Heart right ventricle (tissue), 16 donors: ENCODE measurements at regions of chr22 and their contacts with region 1.

Region 1: GRCh38 chr22:24736526-24737053 is 37.9 kb downstream of the PIWIL3 start:
- DNase-seq: no peak
- ATAC-seq: peak in 1 of 8 donors; percentile 55
- H3K4me3 ChIP-seq: no peak overlapping the region
- H3K27ac ChIP-seq: no peak overlapping the region
- H3K4me1 ChIP-seq: no peaks in the 10 kb centered on the region
- H3K27me3 ChIP-seq: peaks cover 0 to 33% (median 6%) of the 10 kb centered on the region in 7 donors
- CTCF ChIP-seq: no peak

Region 2: DNA sequence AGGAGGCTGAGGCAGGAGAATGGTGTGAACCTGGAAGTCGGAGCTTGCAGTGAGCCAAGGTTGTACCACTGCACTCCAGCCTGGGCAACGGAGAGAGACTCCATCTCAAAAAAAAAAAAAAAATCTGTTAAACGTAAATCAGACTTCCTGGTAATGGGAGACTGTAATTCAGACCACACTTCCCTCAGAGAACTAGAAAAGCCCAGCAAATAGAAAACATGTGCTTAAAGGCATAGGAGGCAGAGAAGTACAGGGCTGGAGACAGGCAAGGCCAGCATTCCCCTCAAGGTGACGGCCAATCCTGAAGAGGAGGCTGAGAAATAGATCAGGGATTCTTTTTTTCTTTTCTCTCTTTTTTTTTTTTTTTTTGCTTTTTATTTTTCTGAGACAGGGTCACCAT is 499.9 kb before region 1 on chr22:
- intact Hi-C with region 1: loop called in 1 of 10 experiments (anchors 5 kb)
- DNase-seq: no peak
- ATAC-seq: no peak
- H3K4me3 ChIP-seq: no peak overlapping the region
- H3K27ac ChIP-seq: no peak overlapping the region
- H3K4me1 ChIP-seq: peaks cover 0 to 17% (median 5%) of the 10 kb centered on the region in 9 donors
- H3K27me3 ChIP-seq: no peaks in the 10 kb centered on the region
- CTCF ChIP-seq: no peak

Region 3: GRCh38 chr22:24926849-24927579 is 190.4 kb after region 1 on chr22:
- intact Hi-C with region 1: no loop called
- DNase-seq: no peak
- ATAC-seq: no peak
- H3K4me3 ChIP-seq: no peak overlapping the region
- H3K27ac ChIP-seq: peak overlapping the region in 1 of 10 donors; percentile 33
- H3K4me1 ChIP-seq: no peaks in the 10 kb centered on the region
- H3K27me3 ChIP-seq: peaks cover 0 to 4% (median 0%) of the 10 kb centered on the region in 7 donors
- CTCF ChIP-seq: no peak

Region 4: DNA sequence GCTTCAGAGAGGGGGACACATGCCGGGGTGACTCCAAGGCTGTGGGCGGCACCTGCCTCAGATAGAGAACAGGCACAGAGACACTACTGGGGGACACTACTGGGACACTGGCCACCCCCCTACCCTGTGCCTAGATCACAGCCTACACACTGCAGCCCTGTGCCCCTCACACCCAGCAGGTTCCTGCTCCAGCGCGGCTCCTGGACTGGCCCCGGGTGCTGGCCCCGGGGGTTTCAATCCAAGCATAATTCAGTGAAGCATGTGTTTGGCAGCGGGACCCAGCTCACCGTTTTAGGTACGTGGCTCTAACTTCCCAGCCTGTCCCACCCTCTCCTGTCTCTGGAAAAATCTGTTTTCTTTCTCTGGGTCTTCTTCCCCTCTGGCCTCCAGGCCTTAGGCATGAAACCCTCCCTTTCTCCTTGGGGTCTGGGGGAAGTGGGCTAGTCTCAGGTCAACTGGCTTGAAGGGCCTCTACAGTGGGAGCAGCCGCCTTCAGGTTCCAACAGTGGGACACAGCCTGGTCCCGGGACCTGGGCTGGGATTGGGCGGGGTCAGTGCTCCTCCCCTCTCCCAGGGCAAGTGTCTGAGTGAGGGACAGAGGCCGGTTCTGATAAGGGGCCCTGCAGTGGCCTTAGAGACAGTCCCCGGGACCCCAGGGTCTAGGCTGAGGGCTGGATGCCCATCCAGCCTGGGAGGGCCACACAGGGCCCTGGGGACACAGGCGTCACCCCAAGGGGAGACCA is 581.7 kb after region 1 on chr22:
- intact Hi-C with region 1: loop called in 1 of 10 experiments (anchors 5 kb)
- DNase-seq: no peak
- ATAC-seq: peak in 2 of 8 donors; percentile 13 to 38
- H3K4me3 ChIP-seq: no peak overlapping the region
- H3K27ac ChIP-seq: no peak overlapping the region
- H3K4me1 ChIP-seq: no peaks in the 10 kb centered on the region
- H3K27me3 ChIP-seq: no peaks in the 10 kb centered on the region
- CTCF ChIP-seq: no peak